ENCODE measurements at regions of chrX and their contacts with region 1.

Region 1: DNA sequence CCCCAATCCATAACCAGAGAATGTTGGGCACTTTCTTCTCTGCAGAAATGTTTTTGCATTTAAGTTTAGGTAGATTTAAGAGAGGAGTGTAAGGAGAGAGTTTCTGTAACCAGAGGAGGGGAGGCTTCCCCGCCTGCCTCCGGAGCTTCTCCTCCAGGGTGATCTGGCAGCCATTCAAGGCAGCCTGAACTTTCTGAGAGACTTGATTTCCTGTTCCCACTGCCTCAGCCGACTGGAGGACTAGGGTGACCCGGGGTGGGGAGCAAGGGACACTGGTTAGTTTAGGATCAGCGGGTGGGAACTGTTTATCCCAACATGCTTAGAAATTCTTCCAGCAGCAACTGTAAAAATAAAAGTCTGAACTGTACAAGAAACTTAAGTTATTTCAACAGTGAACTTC is 15.1 kb downstream of the FAM9C start:
- DNase-seq: no peak
- H3K4me3 ChIP-seq: no peak overlapping the region
- H3K4me3 Mint-ChIP-seq: peak overlapping the region; percentile 33 to 79 (median 65)
- H3K27ac ChIP-seq: peak overlapping the region; percentile 42
- H3K27ac Mint-ChIP-seq: peak overlapping the region; percentile 74 to 94 (median 90)
- H3K4me1 ChIP-seq: peaks cover 72% of the 10 kb centered on the region
- H3K4me1 Mint-ChIP-seq: peaks cover 45 to 76% (median 61%) of the 10 kb centered on the region in 4 donors
- H3K27me3 ChIP-seq: no peaks in the 10 kb centered on the region
- H3K27me3 Mint-ChIP-seq: no peaks in the 10 kb centered on the region

Region 2: DNA sequence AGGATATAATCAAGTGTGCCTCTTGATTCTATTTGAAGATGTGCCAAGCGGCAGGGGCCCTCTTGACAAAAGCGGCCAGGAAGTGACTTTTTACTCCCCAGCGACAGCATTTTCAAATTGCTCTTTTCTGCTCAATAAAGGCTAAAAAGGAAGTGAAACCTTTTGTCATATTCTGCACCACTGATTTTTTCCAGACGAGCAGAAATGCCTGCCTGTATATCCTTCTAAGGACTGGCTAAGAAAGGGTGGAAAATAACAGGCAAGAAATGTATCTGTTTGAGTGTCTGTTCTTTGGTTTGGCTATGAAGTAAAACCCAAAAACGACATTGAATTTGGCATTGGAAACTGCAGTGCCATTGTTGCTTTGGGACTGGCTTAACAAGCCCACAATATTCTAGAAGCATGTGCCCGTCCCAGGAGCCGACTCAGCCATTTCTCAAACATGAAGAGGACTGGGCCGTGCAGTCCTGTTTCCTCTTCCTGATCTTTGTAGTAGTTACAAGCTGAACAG is 29.0 kb before region 1 on chrX:
- CTCF ChIA-PET with region 1: interaction called, 3 read pairs
- POLR2A ChIA-PET with region 1: interaction called, 31 read pairs
- intact Hi-C with region 1: no loop called
- DNase-seq: peak; percentile 55 to 68 (median 59)
- H3K4me3 ChIP-seq: no peak overlapping the region
- H3K4me3 Mint-ChIP-seq: peak overlapping the region; percentile 71 to 88 (median 78)
- H3K27ac ChIP-seq: peak overlapping the region; percentile 72
- H3K27ac Mint-ChIP-seq: peak overlapping the region; percentile 91 to 98 (median 94)
- H3K4me1 ChIP-seq: peaks cover 91% of the 10 kb centered on the region
- H3K4me1 Mint-ChIP-seq: peaks cover 45 to 84% (median 69%) of the 10 kb centered on the region in 4 donors
- H3K27me3 ChIP-seq: no peaks in the 10 kb centered on the region
- H3K27me3 Mint-ChIP-seq: no peaks in the 10 kb centered on the region

Region 3: GRCh38 chrX:13013363-13014110 is 15.8 kb before region 1 on chrX:
- CTCF ChIA-PET with region 1: interaction called, 3 read pairs
- POLR2A ChIA-PET with region 1: interaction called, 28 read pairs
- intact Hi-C with region 1: loop called (anchors 2 kb)
- DNase-seq: peak in 2 of 5 donors; percentile 19 to 23
- H3K4me3 ChIP-seq: no peak overlapping the region
- H3K4me3 Mint-ChIP-seq: peak overlapping the region; percentile 6 to 44 (median 20)
- H3K27ac ChIP-seq: peak overlapping the region; percentile 61
- H3K27ac Mint-ChIP-seq: peak overlapping the region; percentile 56 to 93 (median 80)
- H3K4me1 ChIP-seq: peaks cover 56% of the 10 kb centered on the region
- H3K4me1 Mint-ChIP-seq: peaks cover 36 to 72% (median 53%) of the 10 kb centered on the region in 4 donors
- H3K27me3 ChIP-seq: no peaks in the 10 kb centered on the region
- H3K27me3 Mint-ChIP-seq: no peaks in the 10 kb centered on the region

Region 4: GRCh38 chrX:13051529-13052172 is 22.3 kb after region 1 on chrX:
- CTCF ChIA-PET with region 1: interaction called, 9 read pairs
- POLR2A ChIA-PET with region 1: interaction called, 26 read pairs
- intact Hi-C with region 1: loop called (anchors 2 kb)
- DNase-seq: peak; percentile 61 to 71 (median 70)
- H3K4me3 ChIP-seq: no peak overlapping the region
- H3K4me3 Mint-ChIP-seq: peak overlapping the region in 7 of 8 donors; percentile 10 to 80 (median 52)
- H3K27ac ChIP-seq: peak overlapping the region; percentile 42
- H3K27ac Mint-ChIP-seq: peak overlapping the region; percentile 85 to 97 (median 95)
- H3K4me1 ChIP-seq: peaks cover 88% of the 10 kb centered on the region
- H3K4me1 Mint-ChIP-seq: peaks cover 47 to 87% (median 65%) of the 10 kb centered on the region in 4 donors
- H3K27me3 ChIP-seq: no peaks in the 10 kb centered on the region
- H3K27me3 Mint-ChIP-seq: no peaks in the 10 kb centered on the region

Measured in CD4-positive, alpha-beta memory T cell (primary cell).